ENCODE measurements at regions of chr7 and their contacts with region 1.

Region 1: DNA sequence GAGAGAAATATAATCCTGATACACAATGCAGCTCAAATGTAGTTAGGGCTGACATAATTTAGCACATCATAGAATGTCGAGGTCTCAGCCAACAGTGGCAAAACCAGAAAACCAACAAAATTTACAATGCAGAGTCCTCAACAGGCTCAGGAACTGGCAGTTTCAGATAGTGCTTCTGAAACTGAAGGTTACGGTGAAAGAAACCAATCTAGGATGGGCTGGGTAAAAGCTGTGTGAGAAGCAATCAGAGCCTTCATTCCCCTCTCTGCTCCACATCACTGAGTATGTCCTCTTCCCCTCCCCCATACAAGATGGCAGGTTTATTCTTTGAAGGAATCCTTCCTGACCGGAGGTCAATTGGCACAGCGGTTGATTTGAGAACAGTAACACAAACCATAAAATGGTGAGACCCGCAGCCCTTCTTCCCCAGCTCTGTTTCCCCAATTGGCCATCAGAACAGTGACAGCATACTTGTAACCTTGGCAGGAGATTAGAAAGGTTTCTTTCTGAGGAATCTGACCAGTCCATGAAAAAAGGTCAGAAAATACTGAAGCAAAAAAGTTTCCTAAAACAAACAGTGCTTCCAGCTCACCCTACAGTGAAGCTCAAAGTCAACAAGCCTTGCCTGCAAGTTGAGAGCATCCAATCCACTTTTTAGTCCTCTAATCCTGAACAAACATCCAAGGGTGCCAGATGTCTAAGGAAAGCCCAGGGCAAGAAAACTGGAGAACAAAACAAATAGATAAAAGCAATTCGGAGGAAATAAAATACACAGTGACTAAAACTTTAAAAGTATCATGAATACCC is 54.0 kb upstream of the IL6 start:
- DNase-seq: peak; percentile 96
- ATAC-seq: peak; percentile 97
- H3K4me3 ChIP-seq: no peak overlapping the region
- H3K27ac ChIP-seq: peak overlapping the region; percentile 96
- H3K4me1 ChIP-seq: peaks cover 63% of the 10 kb centered on the region
- H3K27me3 ChIP-seq: no peaks in the 10 kb centered on the region
- CTCF ChIP-seq: no peak

Region 2: DNA sequence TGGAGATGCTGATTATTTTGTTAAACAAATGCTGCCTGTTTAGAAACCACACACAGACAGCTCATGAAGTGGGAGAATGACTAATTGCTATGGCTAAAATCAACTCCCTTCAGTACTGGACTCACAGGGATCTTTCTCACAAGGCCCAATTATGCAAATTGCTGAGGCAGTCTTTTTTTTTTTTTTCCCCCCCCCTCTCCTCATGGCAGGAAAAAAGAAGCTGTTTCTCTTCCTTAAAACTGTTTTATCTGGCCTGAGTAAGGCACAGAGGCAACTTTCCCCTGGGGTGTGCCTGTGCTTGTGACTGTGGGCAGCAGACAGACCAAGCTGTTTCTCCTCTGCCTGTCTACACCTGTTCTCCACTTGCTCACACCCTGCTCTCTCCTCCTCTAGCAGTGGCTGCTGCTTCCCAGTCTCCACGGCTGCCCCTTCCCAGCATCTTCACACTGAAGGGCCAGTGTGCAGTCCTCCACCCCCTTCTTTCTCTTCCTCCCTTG is 107.7 kb before region 1 on chr7:
- CTCF ChIA-PET with region 1: interaction called, 10 read pairs
- POLR2A ChIA-PET with region 1: interaction called, 8 read pairs
- intact Hi-C with region 1: loop called (anchors 1 kb)
- DNase-seq: peak; percentile 60
- ATAC-seq: peak; percentile 16
- H3K4me3 ChIP-seq: peak overlapping the region; percentile 14; the same call in 1 of the 2 replicates
- H3K27ac ChIP-seq: peak overlapping the region; percentile 95
- H3K4me1 ChIP-seq: peaks cover 76% of the 10 kb centered on the region
- H3K27me3 ChIP-seq: no peaks in the 10 kb centered on the region
- CTCF ChIP-seq: no peak

Region 3: DNA sequence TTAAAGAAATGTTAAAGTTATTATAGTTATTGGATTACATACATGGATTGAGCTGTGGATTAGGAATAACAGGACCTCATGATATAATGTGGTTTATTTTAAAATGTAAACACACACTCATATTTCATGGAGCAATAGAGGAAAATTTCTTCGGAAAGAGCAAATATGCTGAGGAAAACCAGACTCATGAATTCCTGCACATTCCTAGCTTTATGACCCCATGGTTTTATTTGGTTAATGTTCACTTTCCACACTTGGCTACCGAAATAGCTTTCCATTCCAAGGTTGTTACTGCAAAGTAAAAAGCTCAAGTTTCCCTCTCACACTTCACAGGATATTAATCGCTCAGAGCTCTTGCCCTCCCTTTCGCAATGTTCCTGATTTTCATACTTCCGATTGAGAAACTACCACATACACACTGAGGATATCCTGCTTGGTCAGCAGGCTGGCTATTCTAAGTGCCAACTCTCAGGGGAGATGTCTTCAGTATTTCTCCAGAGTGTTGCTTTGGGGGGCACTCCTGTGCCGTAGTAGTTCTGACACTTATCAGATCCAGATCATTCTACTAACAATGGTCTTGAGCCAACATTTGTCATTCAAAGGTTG is 95.5 kb before region 1 on chr7:
- CTCF ChIA-PET with region 1: interaction called, 3 read pairs
- POLR2A ChIA-PET with region 1: no interaction called
- intact Hi-C with region 1: loop called (anchors 1 kb)
- DNase-seq: peak; percentile 93
- ATAC-seq: peak; percentile 67
- H3K4me3 ChIP-seq: peak overlapping the region; percentile 24; the same call in 1 of the 2 replicates
- H3K27ac ChIP-seq: peak overlapping the region; percentile 98
- H3K4me1 ChIP-seq: peaks cover 41% of the 10 kb centered on the region
- H3K27me3 ChIP-seq: no peaks in the 10 kb centered on the region
- CTCF ChIP-seq: no peak

Region 4: DNA sequence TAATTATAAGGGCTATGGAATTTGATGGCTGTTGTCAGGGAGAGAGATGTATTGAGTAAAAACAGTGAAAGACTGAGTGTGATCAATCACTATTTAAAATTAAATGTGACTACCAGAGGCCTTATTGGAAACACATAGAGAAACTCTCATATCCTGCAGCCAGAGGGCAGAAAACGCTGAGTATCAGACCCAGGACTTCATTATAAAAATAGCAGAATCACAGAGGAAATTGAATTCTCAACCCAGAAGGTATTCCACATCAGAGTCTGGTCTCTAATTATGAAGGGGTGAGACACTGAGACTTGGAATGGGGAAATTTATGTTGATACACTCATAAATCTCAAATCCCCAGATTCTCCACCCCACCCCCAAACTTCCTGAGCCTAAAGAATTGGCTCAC is 15.6 kb before region 1 on chr7:
- CTCF ChIA-PET with region 1: no interaction called
- POLR2A ChIA-PET with region 1: interaction called, 13 read pairs
- intact Hi-C with region 1: no loop called
- DNase-seq: no peak
- ATAC-seq: no peak
- H3K4me3 ChIP-seq: no peak overlapping the region
- H3K27ac ChIP-seq: no peak overlapping the region
- H3K4me1 ChIP-seq: no peaks in the 10 kb centered on the region
- H3K27me3 ChIP-seq: no peaks in the 10 kb centered on the region
- CTCF ChIP-seq: no peak

Region 5: DNA sequence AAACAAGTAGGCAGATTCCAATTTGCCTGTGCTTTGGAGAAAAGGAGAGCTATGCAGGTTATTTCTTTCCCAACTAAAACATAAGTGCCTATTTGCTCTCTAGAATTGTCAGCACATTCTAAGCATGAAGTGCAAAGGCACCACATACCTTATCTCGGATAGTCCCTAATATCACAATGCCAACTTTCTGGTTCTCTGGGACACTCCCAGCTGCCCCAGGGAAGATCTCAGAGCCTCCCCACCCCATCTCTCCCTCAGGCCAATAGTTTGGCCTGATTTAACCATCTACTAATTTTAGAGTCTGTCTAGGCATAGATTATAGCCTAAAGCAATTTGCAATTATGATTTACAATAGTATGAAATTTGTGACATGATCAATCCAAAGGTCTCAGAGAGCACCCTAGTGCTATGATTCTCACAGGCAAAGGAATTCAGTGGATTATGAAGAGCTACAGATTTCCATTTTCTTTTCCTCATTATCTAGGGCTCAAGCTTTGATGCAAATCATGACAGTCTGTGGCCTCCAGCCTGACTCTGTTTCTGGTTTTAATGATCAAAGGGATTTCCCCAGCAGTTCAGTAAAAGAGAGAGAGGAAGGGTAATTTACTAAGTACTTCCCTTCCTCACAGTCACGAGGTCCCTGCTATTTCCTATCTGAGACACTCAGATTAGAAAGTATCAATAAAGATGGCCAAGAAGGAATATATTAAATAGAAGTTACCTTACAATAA is 25.0 kb after region 1 on chr7:
- CTCF ChIA-PET with region 1: no interaction called
- POLR2A ChIA-PET with region 1: interaction called, 33 read pairs
- intact Hi-C with region 1: no loop called
- DNase-seq: no peak
- ATAC-seq: no peak
- H3K4me3 ChIP-seq: no peak overlapping the region
- H3K27ac ChIP-seq: no peak overlapping the region
- H3K4me1 ChIP-seq: no peaks in the 10 kb centered on the region; the same call in 1 of the 2 replicates
- H3K27me3 ChIP-seq: no peaks in the 10 kb centered on the region
- CTCF ChIP-seq: no peak

Region 6: DNA sequence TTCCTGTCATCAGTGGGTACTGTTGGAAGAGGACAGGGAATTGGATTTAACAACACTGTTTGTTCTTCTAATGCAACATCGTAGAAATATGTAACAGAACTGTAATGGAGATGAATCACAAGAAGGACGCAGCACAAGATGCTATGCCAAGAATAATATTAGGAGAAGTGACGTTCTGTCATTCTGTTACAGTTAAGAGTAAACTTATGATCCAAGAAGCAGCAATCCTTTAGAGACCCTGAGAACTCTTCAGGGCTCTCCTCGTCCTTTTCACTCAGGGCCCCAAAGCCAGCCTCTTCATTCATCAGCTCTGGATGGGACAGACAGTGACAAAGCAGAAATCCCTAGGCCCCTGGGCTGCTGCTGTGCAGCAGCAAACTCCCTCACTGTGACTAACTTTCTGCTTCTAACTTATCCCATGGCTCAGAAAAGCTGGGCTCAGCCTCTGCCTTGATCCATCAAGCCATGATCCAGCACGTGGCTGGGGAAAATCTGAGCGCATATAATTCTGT is 45.2 kb after region 1 on chr7:
- CTCF ChIA-PET with region 1: no interaction called
- POLR2A ChIA-PET with region 1: no interaction called
- intact Hi-C with region 1: loop called (anchors 1 kb)
- DNase-seq: peak; percentile 94
- ATAC-seq: peak; percentile 95
- H3K4me3 ChIP-seq: peak overlapping the region; percentile 41; the same call in 1 of the 2 replicates
- H3K27ac ChIP-seq: peak overlapping the region; percentile 91
- H3K4me1 ChIP-seq: peaks cover 26% of the 10 kb centered on the region
- H3K27me3 ChIP-seq: no peaks in the 10 kb centered on the region
- CTCF ChIP-seq: no peak

Region 7: DNA sequence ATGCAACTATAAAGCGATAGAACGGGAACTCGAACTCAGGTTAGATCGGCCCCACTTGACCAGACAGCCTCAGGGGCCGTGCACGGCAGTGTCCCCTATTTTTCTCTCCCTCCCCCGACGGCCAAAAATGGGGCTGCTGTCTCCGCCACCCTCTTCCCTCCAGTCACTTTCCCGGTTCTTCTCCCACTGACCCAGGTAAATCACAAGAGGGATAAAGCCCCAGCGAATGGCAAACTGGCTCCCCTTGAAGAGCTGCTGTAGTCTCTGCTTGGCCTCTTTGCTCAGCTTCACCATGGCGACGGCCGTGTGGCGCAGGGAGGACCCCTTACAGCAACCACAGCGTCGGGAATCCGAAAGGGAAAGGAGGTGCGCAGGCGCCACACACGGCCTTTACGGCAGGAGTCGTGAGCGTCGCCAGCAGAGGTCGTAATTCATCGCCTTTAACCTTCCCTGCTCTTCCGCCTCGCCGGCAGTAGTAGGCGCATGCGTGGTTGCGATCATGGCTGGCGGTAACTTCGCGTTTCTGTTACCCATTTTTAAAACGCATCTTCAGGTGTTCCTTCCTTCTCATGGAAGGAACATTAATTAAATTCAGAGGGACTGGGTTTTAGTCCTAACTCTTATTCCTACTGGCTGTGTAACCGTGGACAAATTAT is 149.6 kb after region 1 on chr7 and contains the start of gene TOMM7:
- CTCF ChIA-PET with region 1: no interaction called
- POLR2A ChIA-PET with region 1: no interaction called
- intact Hi-C with region 1: loop called (anchors 2 kb)
- DNase-seq: peak; percentile 96
- ATAC-seq: peak; percentile 78
- H3K4me3 ChIP-seq: peak within 1 kb of the TSS; percentile 89
- H3K27ac ChIP-seq: peak within 1 kb of the TSS; percentile 42
- H3K4me1 ChIP-seq: peaks cover 31% of the 10 kb centered on the region
- H3K27me3 ChIP-seq: no peaks in the 10 kb centered on the region
- CTCF ChIP-seq: no peak
- total RNA-seq, gene TOMM7: 132 and 151 TPM in 2 replicates